Activated naive CD4-positive, alpha-beta T cell treated with anti-CD3 and anti-CD28 coated beads for 36 hours (primary cell): ENCODE measurements at regions of chr2 and their contacts with region 1.

Region 1: DNA sequence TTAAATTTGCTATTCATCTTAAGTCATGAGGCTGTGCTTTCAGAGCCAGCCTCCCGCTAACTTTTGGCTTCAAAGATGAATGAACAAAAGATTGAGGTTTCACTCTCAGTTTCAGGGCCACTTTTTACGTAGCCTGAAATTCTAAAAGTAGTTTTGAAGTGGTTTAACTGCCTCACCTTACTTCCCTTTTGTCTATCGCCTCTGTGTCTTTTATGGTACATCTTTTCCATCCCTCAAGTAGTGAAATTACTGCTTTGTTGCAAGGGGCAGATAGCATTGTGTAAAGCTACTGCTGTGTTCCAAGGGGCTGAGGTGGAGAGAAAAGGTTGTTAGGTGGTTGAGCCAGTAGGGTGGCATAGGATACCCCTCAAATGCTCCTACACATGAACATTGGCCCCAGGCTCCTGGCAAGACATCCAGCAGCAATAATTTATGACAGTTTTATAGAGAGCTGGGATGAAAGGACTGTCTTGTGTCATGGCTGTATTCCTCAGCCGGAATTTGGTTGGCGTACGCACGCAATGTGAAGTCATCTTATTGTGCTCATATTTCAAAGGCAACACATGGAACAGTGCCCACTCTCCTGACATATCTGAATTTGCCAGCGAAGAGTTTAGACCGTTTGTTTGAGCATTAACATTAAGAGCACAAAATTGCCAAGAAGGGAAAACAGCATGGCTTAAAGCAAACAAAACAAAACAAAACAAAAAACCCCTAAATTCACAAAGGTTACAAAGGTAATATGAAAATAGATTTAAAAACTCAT is 32.2 kb downstream of the QPCT start:
- DNase-seq: peak; percentile 67
- H3K4me3 Mint-ChIP-seq: no peak overlapping the region
- H3K27ac Mint-ChIP-seq: no peak overlapping the region
- H3K4me1 Mint-ChIP-seq: peaks cover 34% of the 10 kb centered on the region
- H3K27me3 Mint-ChIP-seq: peaks cover 45% of the 10 kb centered on the region

Region 2: GRCh38 chr2:36246320-36246990 is 1130.1 kb before region 1 on chr2:
- CTCF ChIA-PET with region 1: no interaction called
- intact Hi-C with region 1: loop called (anchors 1 kb)
- DNase-seq: no peak
- H3K4me3 Mint-ChIP-seq: peak overlapping the region; percentile 24
- H3K27ac Mint-ChIP-seq: peak overlapping the region; percentile 72
- H3K4me1 Mint-ChIP-seq: peaks cover 59% of the 10 kb centered on the region
- H3K27me3 Mint-ChIP-seq: no peaks in the 10 kb centered on the region

Region 3: DNA sequence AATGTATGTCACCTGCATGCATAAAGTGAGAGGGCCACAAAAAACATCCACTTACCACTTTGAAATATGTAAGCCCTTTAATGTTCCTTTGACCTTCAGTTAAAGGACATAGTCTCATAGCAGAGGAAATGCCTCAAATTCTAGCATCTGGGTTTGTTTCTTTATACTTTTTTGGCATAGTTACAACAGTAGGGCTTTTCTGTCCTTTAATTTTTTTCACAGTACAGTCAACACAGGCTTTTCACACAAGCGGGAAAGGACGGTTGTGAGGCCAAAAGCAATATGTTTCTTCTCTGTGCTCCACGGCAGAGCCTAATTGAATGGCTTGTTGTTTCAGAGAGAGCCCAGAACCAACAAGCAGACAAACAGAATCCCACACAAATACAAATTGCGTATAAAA is 963.4 kb before region 1 on chr2:
- CTCF ChIA-PET with region 1: no interaction called
- intact Hi-C with region 1: no loop called
- DNase-seq: no peak
- H3K4me3 Mint-ChIP-seq: no peak overlapping the region
- H3K27ac Mint-ChIP-seq: no peak overlapping the region
- H3K4me1 Mint-ChIP-seq: no peaks in the 10 kb centered on the region
- H3K27me3 Mint-ChIP-seq: no peaks in the 10 kb centered on the region

Region 4: GRCh38 chr2:37156857-37157714 is 219.5 kb before region 1 on chr2 and contains the start of gene EIF2AK2:
- CTCF ChIA-PET with region 1: no interaction called
- intact Hi-C with region 1: loop called (anchors 5 kb)
- DNase-seq: peak; percentile 80
- H3K4me3 Mint-ChIP-seq: peak within 1 kb of the TSS; percentile 86
- H3K27ac Mint-ChIP-seq: peak within 1 kb of the TSS; percentile 85
- H3K4me1 Mint-ChIP-seq: peaks cover 30% of the 10 kb centered on the region
- H3K27me3 Mint-ChIP-seq: no peaks in the 10 kb centered on the region
- total RNA-seq, gene EIF2AK2: 54.5 to 55.7 TPM

Region 5: DNA sequence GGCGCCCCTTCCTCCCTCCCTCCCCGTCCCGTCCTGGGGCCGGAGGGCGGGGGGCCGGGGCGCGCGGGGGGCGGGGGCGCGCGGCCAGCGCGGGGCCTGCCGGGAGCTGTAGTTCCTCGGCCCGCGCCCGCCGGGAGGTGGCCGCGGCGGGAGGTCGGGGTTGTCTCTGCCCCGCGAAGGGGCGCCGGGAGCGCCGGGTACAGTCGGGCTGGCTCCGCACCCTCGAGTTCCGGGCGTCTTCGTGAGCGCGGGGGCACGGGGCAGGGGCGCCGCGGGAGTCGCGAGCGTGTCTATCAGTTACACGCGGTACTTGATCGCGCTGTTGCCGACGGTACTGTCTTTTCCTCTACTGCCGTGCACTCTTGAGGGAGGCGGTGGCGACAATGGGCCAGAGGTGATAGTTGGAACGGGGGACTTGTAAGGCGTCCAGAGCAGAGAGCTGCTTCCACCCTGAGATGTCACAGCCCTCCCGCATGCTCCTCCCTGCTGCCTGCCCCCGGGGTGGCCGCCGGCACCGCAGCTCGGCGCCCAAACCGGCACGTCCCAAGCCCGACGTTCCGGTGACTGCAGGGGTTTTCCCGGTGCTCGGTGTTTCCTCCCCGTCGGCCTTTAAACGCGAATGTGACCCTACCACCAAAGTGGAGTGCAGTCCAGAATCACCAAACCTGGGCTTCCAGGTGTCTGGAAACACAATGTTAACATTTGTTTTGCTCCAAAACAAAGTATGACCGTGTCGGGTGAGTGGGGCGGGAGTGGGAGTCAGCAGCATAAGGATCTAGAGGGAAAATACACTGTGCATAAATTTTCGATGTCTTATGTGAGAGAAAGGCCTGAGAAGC is 51.6 kb before region 1 on chr2 and contains the start of gene PRKD3:
- CTCF ChIA-PET with region 1: no interaction called
- intact Hi-C with region 1: loop called (anchors 1 kb)
- DNase-seq: peak; percentile 51
- H3K4me3 Mint-ChIP-seq: peak within 1 kb of the TSS; percentile 93
- H3K27ac Mint-ChIP-seq: peak within 1 kb of the TSS; percentile 84
- H3K4me1 Mint-ChIP-seq: peaks cover 29% of the 10 kb centered on the region
- H3K27me3 Mint-ChIP-seq: peaks cover 17% of the 10 kb centered on the region
- total RNA-seq, gene PRKD3: 13.0 TPM

Region 6: GRCh38 chr2:37449761-37450296 is 73.2 kb after region 1 on chr2:
- CTCF ChIA-PET with region 1: no interaction called
- intact Hi-C with region 1: no loop called
- DNase-seq: no peak
- H3K4me3 Mint-ChIP-seq: no peak overlapping the region
- H3K27ac Mint-ChIP-seq: no peak overlapping the region
- H3K4me1 Mint-ChIP-seq: peaks cover 19% of the 10 kb centered on the region
- H3K27me3 Mint-ChIP-seq: no peaks in the 10 kb centered on the region

Region 7: DNA sequence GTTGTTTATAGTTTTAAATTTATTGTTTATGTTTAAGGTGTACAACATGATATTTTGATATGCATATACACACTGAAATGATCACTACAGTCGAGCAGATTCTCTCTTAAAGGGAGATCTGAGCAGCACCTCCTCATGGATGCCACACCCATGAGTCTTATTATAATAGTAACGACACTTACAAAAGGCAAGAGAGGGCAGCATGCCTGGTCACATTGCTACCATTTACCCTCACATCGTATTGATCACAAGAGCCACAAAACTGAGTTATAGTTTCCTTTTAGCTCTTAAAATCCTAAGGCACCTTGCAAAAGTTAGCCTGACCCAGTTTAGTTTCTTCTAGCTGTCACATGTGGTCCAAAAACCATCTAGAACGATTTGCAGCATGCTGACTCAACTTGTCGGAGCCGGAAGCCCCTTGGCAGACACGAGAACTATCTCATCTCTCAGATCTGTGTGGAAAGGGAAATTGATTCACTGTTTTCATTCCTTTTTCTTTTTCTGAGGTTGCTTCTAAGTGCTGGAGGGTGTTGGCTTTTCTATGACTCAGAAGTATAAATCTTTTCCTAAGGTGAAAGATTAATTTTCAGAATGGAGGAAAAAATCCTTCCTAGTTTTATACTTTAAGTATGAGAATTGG is 209.5 kb after region 1 on chr2:
- CTCF ChIA-PET with region 1: no interaction called
- intact Hi-C with region 1: loop called (anchors 1 kb)
- DNase-seq: peak; percentile 85
- H3K4me3 Mint-ChIP-seq: peak overlapping the region; percentile 25
- H3K27ac Mint-ChIP-seq: peak overlapping the region; percentile 67
- H3K4me1 Mint-ChIP-seq: peaks cover 76% of the 10 kb centered on the region
- H3K27me3 Mint-ChIP-seq: no peaks in the 10 kb centered on the region

Region 8: GRCh38 chr2:37851828-37852584 is 475.4 kb after region 1 on chr2:
- CTCF ChIA-PET with region 1: no interaction called
- intact Hi-C with region 1: loop called (anchors 1 kb)
- DNase-seq: no peak
- H3K4me3 Mint-ChIP-seq: peak overlapping the region; percentile 17
- H3K27ac Mint-ChIP-seq: peak overlapping the region; percentile 81
- H3K4me1 Mint-ChIP-seq: peaks cover 26% of the 10 kb centered on the region
- H3K27me3 Mint-ChIP-seq: peaks cover 6% of the 10 kb centered on the region